H1 (cell line): ENCODE measurements at regions of chr11 and their contacts with region 1.

Region 1: GRCh38 chr11:109426442-109427240 is 4.7 kb downstream of the C11orf87 start:
- DNase-seq: no peak
- H3K4me3 ChIP-seq: no peak overlapping the region
- H3K27ac ChIP-seq: no peak overlapping the region
- H3K4me1 ChIP-seq: peaks cover 0 to 11% (median 6%) of the 10 kb centered on the region in 4 experiments; a peak in 5 of 7 replicates
- H3K27me3 ChIP-seq: peaks cover 15 to 29% (median 26%) of the 10 kb centered on the region in 4 experiments
- CTCF ChIP-seq: peak in 1 of 3 experiments; percentile 40; a peak in 2 of 4 replicates
- EP300 ChIP-seq: no peak
- POLR2A ChIP-seq: no peak
- RAD21 ChIP-seq: peak; percentile 10 to 32; a peak in 2 of 4 replicates

Region 2: GRCh38 chr11:109026891-109027489 is 399.7 kb before region 1 on chr11:
- CTCF ChIA-PET with region 1: no interaction called
- POLR2A ChIA-PET with region 1: no interaction called
- DNase-seq: no peak
- H3K4me3 ChIP-seq: no peak overlapping the region
- H3K27ac ChIP-seq: no peak overlapping the region
- H3K4me1 ChIP-seq: no peaks in the 10 kb centered on the region
- H3K27me3 ChIP-seq: no peaks in the 10 kb centered on the region
- CTCF ChIP-seq: no peak
- EP300 ChIP-seq: no peak
- POLR2A ChIP-seq: no peak
- RAD21 ChIP-seq: no peak

Region 3: DNA sequence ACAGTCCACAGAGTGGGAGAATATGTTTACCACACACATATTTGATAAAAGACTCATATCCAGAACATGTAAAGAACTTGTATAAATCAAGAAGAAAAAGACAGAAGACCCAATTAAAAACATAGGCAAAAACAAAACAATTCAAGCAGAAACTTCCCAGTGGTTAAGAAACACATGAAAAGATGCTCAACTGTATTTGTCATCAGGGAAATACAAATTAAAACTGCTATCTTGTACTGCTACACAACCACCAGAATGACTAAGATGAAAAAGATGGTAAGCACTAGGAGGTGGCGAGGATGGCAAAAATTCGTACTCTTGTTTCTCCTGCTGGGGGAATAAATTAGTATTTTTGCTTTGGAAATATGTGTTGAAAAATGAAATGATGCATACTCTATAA is 197.0 kb before region 1 on chr11:
- CTCF ChIA-PET with region 1: no interaction called
- POLR2A ChIA-PET with region 1: no interaction called
- DNase-seq: no peak
- H3K4me3 ChIP-seq: no peak overlapping the region
- H3K27ac ChIP-seq: no peak overlapping the region
- H3K4me1 ChIP-seq: no peaks in the 10 kb centered on the region
- H3K27me3 ChIP-seq: no peaks in the 10 kb centered on the region
- CTCF ChIP-seq: no peak
- EP300 ChIP-seq: no peak
- POLR2A ChIP-seq: no peak
- RAD21 ChIP-seq: no peak

Region 4: DNA sequence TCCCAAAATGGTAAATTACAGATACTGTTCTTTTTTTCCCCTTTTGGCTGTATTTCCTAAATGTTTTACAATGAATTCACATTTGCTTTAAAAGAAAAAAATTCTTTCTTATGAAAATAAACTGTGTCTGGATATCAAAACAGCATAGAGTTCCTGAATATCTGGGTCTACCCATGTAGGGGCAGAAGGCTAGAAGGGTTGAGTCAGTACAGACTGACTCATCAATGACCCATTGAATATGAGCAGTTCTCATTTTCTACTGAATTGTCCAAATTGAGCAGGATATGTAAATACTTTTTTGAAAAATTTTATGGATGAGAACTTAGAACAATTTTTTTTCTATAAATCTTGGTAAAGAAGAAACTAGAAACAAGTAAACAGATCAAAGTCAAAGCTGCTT is 21.0 kb before region 1 on chr11:
- CTCF ChIA-PET with region 1: interaction called, 12 read pairs
- POLR2A ChIA-PET with region 1: no interaction called
- DNase-seq: no peak
- H3K4me3 ChIP-seq: no peak overlapping the region
- H3K27ac ChIP-seq: no peak overlapping the region
- H3K4me1 ChIP-seq: no peaks in the 10 kb centered on the region
- H3K27me3 ChIP-seq: no peaks in the 10 kb centered on the region
- CTCF ChIP-seq: no peak
- EP300 ChIP-seq: no peak
- POLR2A ChIP-seq: no peak
- RAD21 ChIP-seq: no peak

Region 5: DNA sequence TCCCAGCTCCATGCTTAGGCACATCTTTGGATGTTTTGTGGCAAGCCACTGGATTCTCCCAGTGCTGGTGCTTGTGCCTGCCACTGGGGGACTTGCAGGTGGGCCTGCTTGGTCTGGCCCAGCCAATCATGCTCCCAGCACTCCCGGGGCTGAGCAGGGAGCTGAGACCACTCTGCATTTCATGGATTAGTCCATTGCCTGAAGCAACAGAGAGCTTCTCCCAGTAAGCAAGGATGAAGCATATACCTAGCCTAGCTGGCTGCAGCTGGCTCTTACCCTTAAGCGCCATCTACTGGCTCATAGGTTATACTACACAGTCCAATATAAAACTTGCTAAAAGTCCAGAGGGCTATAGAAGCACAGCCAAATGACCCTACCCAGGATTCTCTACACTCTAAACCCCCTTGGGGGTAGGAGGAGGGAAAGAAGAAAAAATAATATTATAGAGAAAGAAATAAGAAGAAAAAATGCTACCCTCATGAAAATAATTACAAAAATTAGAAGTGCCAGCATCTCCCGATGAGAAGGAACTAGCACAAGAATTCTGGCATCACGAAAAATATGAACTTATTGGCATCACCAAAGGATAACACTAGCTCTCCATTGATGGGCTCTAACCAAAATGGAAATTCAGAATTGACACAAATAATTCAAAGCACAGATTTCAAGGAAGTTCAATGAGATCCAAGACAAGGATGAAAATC is 270.7 kb after region 1 on chr11:
- CTCF ChIA-PET with region 1: interaction called, 25 read pairs
- POLR2A ChIA-PET with region 1: no interaction called
- DNase-seq: peak; percentile 19 to 47
- H3K4me3 ChIP-seq: no peak overlapping the region
- H3K27ac ChIP-seq: no peak overlapping the region
- H3K4me1 ChIP-seq: no peaks in the 10 kb centered on the region
- H3K27me3 ChIP-seq: no peaks in the 10 kb centered on the region
- CTCF ChIP-seq: peak in 2 of 3 experiments; percentile 79; a peak in 3 of 4 replicates
- EP300 ChIP-seq: no peak
- POLR2A ChIP-seq: no peak
- RAD21 ChIP-seq: peak; percentile 89 to 95